MCF 10A (cell line): ENCODE measurements at regions of chr9 and their contacts with region 1.

Region 1: GRCh38 chr9:114681594-114682332 is at the start of gene TEX48:
- DNase-seq: peak; percentile 90
- H3K4me3 Mint-ChIP-seq: no peak within 1 kb of the TSS
- H3K27ac Mint-ChIP-seq: no peak within 1 kb of the TSS
- H3K4me1 Mint-ChIP-seq: peaks cover 32% of the 10 kb centered on the region
- H3K27me3 Mint-ChIP-seq: no peaks in the 10 kb centered on the region
- CTCF ChIP-seq: peak; percentile 84
- total RNA-seq, gene TEX48: not detected in 2 replicates

Region 2: GRCh38 chr9:114250235-114250568 is 431.6 kb before region 1 on chr9:
- CTCF ChIA-PET with region 1: no interaction called
- POLR2A ChIA-PET with region 1: no interaction called
- intact Hi-C with region 1: no loop called
- DNase-seq: no peak
- H3K4me3 Mint-ChIP-seq: no peak overlapping the region
- H3K27ac Mint-ChIP-seq: no peak overlapping the region
- H3K4me1 Mint-ChIP-seq: no peaks in the 10 kb centered on the region
- H3K27me3 Mint-ChIP-seq: peaks cover 27% of the 10 kb centered on the region
- CTCF ChIP-seq: no peak

Region 3: GRCh38 chr9:114271641-114272081 is 410.1 kb before region 1 on chr9:
- CTCF ChIA-PET with region 1: no interaction called
- POLR2A ChIA-PET with region 1: no interaction called
- intact Hi-C with region 1: no loop called
- DNase-seq: peak; percentile 43
- H3K4me3 Mint-ChIP-seq: no peak overlapping the region
- H3K27ac Mint-ChIP-seq: no peak overlapping the region
- H3K4me1 Mint-ChIP-seq: peaks cover 3% of the 10 kb centered on the region
- H3K27me3 Mint-ChIP-seq: no peaks in the 10 kb centered on the region
- CTCF ChIP-seq: no peak

Region 4: GRCh38 chr9:114662081-114662989 is 19.4 kb before region 1 on chr9:
- CTCF ChIA-PET with region 1: interaction called, 59 read pairs
- POLR2A ChIA-PET with region 1: interaction called, 3 read pairs
- intact Hi-C with region 1: no loop called
- DNase-seq: peak; percentile 64
- H3K4me3 Mint-ChIP-seq: no peak overlapping the region
- H3K27ac Mint-ChIP-seq: no peak overlapping the region
- H3K4me1 Mint-ChIP-seq: peaks cover 8% of the 10 kb centered on the region
- H3K27me3 Mint-ChIP-seq: no peaks in the 10 kb centered on the region
- CTCF ChIP-seq: peak; percentile 88

Region 5: DNA sequence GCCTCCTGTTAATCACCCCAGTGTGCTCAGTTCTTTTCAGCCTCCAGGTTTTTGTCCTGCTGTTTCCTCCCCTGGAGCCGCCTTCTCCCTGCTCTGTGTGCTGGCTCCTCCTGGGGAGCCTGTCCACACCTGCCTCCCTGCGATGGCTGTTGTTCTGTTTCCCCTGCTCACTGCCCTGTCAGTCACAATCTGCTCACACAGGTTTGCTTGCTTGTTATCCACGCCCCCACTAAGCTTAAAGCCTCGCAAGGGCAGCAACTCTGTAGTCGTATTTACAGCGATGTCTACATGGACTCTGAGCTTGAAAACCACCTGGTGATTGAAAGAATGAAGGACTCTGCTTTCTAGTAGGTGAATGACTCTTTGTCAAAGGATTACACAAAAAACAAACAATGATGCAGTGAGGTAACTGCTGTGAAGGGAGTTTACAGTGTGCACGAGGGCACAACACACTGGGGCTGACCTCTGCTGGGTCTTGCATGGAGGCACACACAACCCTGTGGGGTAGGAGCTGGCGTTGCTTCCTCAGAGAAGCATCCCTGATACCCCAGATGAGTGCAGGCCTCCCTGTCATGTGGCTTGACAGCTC is 39.8 kb after region 1 on chr9:
- CTCF ChIA-PET with region 1: interaction called, 22 read pairs
- POLR2A ChIA-PET with region 1: interaction called, 4 read pairs
- intact Hi-C with region 1: no loop called
- DNase-seq: peak; percentile 49
- H3K4me3 Mint-ChIP-seq: peak overlapping the region; percentile 6
- H3K27ac Mint-ChIP-seq: peak overlapping the region; percentile 3
- H3K4me1 Mint-ChIP-seq: peaks cover 36% of the 10 kb centered on the region
- H3K27me3 Mint-ChIP-seq: no peaks in the 10 kb centered on the region
- CTCF ChIP-seq: no peak

Region 6: DNA sequence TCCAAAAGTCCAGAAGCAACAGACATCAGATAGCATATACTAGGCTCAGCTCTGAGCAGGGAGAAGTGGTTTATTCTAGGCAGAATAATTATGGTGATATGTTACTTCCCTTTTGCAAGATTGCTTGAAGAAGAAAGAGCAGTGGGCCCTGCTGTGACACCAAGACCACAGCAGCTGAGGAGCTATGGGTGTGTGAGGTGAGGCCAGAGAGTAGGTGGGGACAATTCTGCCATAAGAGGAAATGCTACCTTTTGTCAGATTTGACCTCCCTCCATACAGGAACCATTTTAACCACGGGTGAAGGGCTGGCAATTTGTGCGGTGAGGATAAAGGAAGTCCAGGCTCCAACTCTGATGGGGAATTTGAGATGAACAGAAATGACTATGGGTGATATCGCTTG is 72.8 kb after region 1 on chr9:
- CTCF ChIA-PET with region 1: no interaction called
- POLR2A ChIA-PET with region 1: no interaction called
- intact Hi-C with region 1: no loop called
- DNase-seq: no peak
- H3K4me3 Mint-ChIP-seq: no peak overlapping the region
- H3K27ac Mint-ChIP-seq: no peak overlapping the region
- H3K4me1 Mint-ChIP-seq: no peaks in the 10 kb centered on the region
- H3K27me3 Mint-ChIP-seq: peaks cover 35% of the 10 kb centered on the region
- CTCF ChIP-seq: no peak

Region 7: GRCh38 chr9:114824110-114824509 is 142.3 kb after region 1 on chr9:
- CTCF ChIA-PET with region 1: interaction called, 15 read pairs
- POLR2A ChIA-PET with region 1: no interaction called
- intact Hi-C with region 1: no loop called
- DNase-seq: no peak
- H3K4me3 Mint-ChIP-seq: no peak overlapping the region
- H3K27ac Mint-ChIP-seq: no peak overlapping the region
- H3K4me1 Mint-ChIP-seq: no peaks in the 10 kb centered on the region
- H3K27me3 Mint-ChIP-seq: no peaks in the 10 kb centered on the region
- CTCF ChIP-seq: no peak

Region 8: GRCh38 chr9:115008536-115009270 is 326.9 kb after region 1 on chr9:
- CTCF ChIA-PET with region 1: interaction called, 200 read pairs
- POLR2A ChIA-PET with region 1: interaction called, 3 read pairs
- intact Hi-C with region 1: no loop called
- DNase-seq: peak; percentile 80
- H3K4me3 Mint-ChIP-seq: no peak overlapping the region
- H3K27ac Mint-ChIP-seq: no peak overlapping the region
- H3K4me1 Mint-ChIP-seq: peaks cover 2% of the 10 kb centered on the region
- H3K27me3 Mint-ChIP-seq: peaks cover 14% of the 10 kb centered on the region
- CTCF ChIP-seq: no peak

Region 9: DNA sequence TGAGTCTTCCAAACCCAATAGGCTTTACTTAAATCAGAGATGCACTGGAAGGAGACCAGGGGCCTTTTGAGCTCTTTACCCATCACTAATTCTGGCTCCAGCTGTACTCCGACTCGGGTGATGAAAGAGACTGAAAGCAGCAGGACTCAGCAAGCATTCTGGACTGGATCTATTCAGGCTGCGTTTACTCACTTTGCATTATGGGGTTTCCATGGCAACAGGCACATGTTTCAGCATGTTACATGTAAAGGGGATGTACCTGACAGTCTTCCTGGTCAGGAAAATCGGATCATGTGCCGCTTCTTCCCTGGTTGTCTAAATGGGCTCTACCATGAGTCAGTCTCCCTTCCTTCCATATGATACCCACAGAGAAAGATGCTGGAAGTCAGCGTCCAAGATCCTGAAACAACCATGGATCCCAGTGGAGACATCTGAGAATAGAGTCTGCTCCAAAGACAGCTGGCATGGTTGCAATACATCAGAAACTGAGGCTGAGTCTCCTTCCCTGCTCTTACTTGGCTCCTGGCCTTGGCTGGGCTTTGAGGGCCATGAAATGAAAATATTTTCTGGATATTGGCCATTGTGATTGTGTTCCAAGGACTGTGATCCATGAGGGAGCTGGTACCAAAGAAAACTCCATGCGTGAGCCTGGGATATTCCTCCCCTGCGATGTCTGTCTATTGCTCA is 538.7 kb after region 1 on chr9:
- CTCF ChIA-PET with region 1: interaction called, 5 read pairs
- POLR2A ChIA-PET with region 1: no interaction called
- intact Hi-C with region 1: loop called (anchors 10 kb)
- DNase-seq: no peak
- H3K4me3 Mint-ChIP-seq: no peak overlapping the region
- H3K27ac Mint-ChIP-seq: no peak overlapping the region
- H3K4me1 Mint-ChIP-seq: no peaks in the 10 kb centered on the region
- H3K27me3 Mint-ChIP-seq: peaks cover 10% of the 10 kb centered on the region
- CTCF ChIP-seq: no peak